HepG2 (cell line): ENCODE measurements at regions of chr3 and their contacts with region 1.

Region 1: GRCh38 chr3:4633078-4634004 is 140.2 kb downstream of the ITPR1 start:
- DNase-seq: peak; percentile 52
- ATAC-seq: peak; percentile 82
- H3K4me3 ChIP-seq: no peak overlapping the region
- H3K27ac ChIP-seq: no peak overlapping the region
- H3K4me1 ChIP-seq: no peaks in the 10 kb centered on the region
- H3K27me3 ChIP-seq: no peaks in the 10 kb centered on the region
- CTCF ChIP-seq: peak; percentile 86
- EP300 ChIP-seq: no peak
- POLR2A ChIP-seq: no peak
- RAD21 ChIP-seq: peak; percentile 70

Region 2: GRCh38 chr3:4334548-4334947 is 298.8 kb before region 1 on chr3:
- CTCF ChIA-PET with region 1: interaction called, 3 read pairs
- POLR2A ChIA-PET with region 1: no interaction called
- in situ Hi-C with region 1: no loop called
- intact Hi-C with region 1: loop called (anchors 5 kb)
- DNase-seq: no peak
- ATAC-seq: no peak
- H3K4me3 ChIP-seq: no peak overlapping the region
- H3K27ac ChIP-seq: no peak overlapping the region
- H3K4me1 ChIP-seq: peaks cover 22% of the 10 kb centered on the region
- H3K27me3 ChIP-seq: no peaks in the 10 kb centered on the region
- CTCF ChIP-seq: peak; percentile 28; the same call in 1 of the 2 replicates
- EP300 ChIP-seq: no peak
- POLR2A ChIP-seq: no peak
- RAD21 ChIP-seq: no peak

Region 3: GRCh38 chr3:4350789-4351163 is 282.6 kb before region 1 on chr3:
- CTCF ChIA-PET with region 1: interaction called, 31 read pairs
- POLR2A ChIA-PET with region 1: no interaction called
- in situ Hi-C with region 1: loop called (anchors 5 kb)
- intact Hi-C with region 1: loop called (anchors 1 kb)
- DNase-seq: peak; percentile 53
- ATAC-seq: peak; percentile 76
- H3K4me3 ChIP-seq: no peak overlapping the region
- H3K27ac ChIP-seq: no peak overlapping the region
- H3K4me1 ChIP-seq: peaks cover 11% of the 10 kb centered on the region
- H3K27me3 ChIP-seq: no peaks in the 10 kb centered on the region
- CTCF ChIP-seq: peak; percentile 75
- EP300 ChIP-seq: no peak
- POLR2A ChIP-seq: no peak
- RAD21 ChIP-seq: peak; percentile 46; the same call in 1 of the 2 replicates

Region 4: DNA sequence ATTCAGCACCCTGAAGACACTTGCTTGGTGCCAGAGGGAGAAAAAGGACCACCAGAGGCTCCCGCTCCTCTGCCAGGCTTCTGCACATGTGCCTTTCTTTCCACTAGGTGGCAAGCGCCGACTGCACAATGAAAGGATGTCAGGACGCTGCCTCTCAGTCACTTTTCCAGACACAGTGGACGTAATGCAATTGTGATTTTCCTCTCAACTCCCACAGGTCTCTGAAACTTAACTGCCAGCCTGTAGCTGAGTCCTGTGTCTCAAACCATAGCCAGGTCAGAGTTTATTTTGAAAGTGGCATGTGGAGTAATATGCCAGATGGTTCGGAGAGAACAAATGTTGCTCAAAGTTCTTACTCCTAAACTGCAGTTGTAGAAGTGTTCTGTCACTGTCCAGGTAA is 22.7 kb after region 1 on chr3:
- CTCF ChIA-PET with region 1: no interaction called
- POLR2A ChIA-PET with region 1: no interaction called
- in situ Hi-C with region 1: no loop called
- intact Hi-C with region 1: no loop called
- DNase-seq: peak; percentile 30
- ATAC-seq: peak; percentile 97
- H3K4me3 ChIP-seq: no peak overlapping the region
- H3K27ac ChIP-seq: no peak overlapping the region
- H3K4me1 ChIP-seq: no peaks in the 10 kb centered on the region
- H3K27me3 ChIP-seq: no peaks in the 10 kb centered on the region
- CTCF ChIP-seq: peak; percentile 70
- EP300 ChIP-seq: no peak
- POLR2A ChIP-seq: no peak
- RAD21 ChIP-seq: peak; percentile 54